Lower lobe of right lung (tissue), 2 donors: ENCODE measurements at regions of chr10 and their contacts with region 1.

Region 1: DNA sequence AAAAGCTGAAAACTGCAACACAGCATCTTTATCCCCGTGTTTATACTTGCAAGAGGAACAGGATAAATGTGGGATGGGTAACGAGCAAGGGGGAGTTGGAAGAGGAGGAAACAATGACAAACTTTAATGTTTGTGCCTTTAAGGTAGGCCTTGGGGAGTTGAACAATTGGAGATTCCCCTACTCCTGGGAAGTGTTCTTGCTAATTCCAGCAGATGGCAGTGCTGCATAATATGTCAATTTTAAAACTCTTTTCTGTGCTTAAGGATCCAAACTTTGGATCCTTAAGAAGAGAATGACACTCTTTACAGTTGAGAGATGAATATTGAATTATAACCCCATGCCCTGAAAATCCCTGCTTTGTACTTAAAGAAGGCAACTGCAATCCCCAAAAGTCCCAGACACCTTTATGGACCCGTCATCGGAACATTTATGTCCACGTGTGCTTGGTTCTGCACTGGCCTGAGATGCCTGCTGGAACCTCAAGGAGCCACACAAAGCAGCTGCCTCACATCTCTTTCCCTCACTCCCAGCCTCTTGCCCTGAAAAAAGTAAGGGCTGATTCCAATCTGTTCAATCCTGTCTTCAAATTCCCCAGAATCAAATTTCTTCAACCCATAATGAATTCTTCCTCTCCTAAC is 12.0 kb downstream of the IFIT5 start:
- DNase-seq: no peak
- ATAC-seq: peak; percentile 81 to 83
- H3K4me3 ChIP-seq: no peak overlapping the region
- H3K27ac ChIP-seq: no peak overlapping the region
- H3K4me1 ChIP-seq: no peaks in the 10 kb centered on the region
- H3K27me3 ChIP-seq: no peaks in the 10 kb centered on the region
- CTCF ChIP-seq: peak; percentile 78

Region 2: GRCh38 chr10:89567576-89568245 is 141.4 kb after region 1 on chr10:
- intact Hi-C with region 1: loop called (anchors 5 kb)
- DNase-seq: no peak
- ATAC-seq: no peak
- H3K4me3 ChIP-seq: no peak overlapping the region
- H3K27ac ChIP-seq: no peak overlapping the region
- H3K4me1 ChIP-seq: peaks cover 14% of the 10 kb centered on the region
- H3K27me3 ChIP-seq: no peaks in the 10 kb centered on the region
- CTCF ChIP-seq: no peak